Tibial artery (tissue), 4 donors: ENCODE measurements at regions of chr10 and their contacts with region 1.

Region 1: GRCh38 chr10:69239816-69240434 is 19.8 kb downstream of the HKDC1 start:
- DNase-seq: peak; percentile 65 to 86
- H3K4me3 ChIP-seq: no peak overlapping the region
- H3K27ac ChIP-seq: peak overlapping the region; percentile 23 to 37
- H3K4me1 ChIP-seq: peaks cover 0 to 38% (median 12%) of the 10 kb centered on the region in 4 donors
- H3K27me3 ChIP-seq: no peaks in the 10 kb centered on the region
- CTCF ChIP-seq: no peak

Region 2: DNA sequence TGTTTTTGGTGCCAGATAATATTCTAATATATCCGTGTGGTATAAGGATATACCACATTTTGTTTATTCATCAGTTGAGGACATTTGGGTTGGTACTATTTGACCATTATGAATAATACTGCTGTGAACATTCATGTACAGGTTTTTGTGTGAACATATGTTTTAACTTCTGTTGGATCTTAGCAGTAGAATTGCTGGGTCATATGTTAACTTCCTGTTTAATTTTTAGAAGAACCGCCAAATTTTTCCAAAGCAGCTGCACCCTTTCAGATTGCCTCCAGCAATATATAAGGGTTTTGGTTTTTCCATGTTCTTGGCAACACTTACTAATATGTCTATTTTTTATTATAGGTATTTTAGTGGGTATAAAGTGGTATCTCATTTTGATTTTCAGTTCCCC is 93.2 kb before region 1 on chr10:
- intact Hi-C with region 1: no loop called
- DNase-seq: no peak
- H3K4me3 ChIP-seq: no peak overlapping the region
- H3K27ac ChIP-seq: no peak overlapping the region
- H3K4me1 ChIP-seq: peaks cover 0 to 4% (median 0%) of the 10 kb centered on the region in 4 donors
- H3K27me3 ChIP-seq: no peaks in the 10 kb centered on the region
- CTCF ChIP-seq: no peak

Region 3: DNA sequence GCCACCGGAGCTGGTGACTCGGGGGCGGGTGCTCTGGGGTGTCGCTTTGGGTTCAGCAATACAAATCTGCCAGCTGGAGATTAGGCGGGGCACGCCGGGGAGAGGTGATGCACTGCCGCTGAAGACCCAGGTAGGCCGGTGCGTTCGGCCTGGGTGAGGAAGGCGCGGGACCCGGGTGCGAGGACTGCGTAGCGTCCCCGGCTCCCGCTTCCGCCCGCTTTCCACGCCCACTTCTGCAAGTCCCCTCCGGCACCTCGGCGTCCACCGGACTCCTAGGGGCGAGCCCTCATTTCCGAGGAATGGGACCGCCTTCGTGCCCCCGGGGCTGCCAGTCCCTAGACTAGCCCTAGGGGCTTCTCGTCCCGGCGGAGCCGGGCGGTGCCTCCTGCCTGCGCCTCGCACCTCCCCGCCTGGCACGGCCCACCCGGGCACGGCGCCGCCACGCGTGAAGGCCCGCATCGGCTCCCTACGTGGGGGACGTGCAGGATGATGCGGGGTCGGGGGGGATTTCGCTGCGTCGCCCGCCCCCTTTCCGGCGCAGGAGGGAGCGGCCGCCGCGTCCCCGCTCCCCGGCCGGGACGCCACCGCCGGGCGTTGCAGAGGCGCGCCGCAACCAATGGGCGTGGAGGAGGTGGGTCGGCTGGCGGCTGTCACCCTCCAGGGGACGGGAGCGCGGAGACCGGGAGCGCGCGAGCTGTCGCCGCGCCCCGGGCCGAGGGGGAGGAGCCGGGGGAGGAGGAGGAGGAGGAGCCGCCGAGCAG is 78.4 kb after region 1 on chr10:
- intact Hi-C with region 1: loop called (anchors 5 kb)
- DNase-seq: peak; percentile 88 to 95
- H3K4me3 ChIP-seq: peak overlapping the region; percentile 85 to 91
- H3K27ac ChIP-seq: peak overlapping the region; percentile 91 to 95
- H3K4me1 ChIP-seq: peaks cover 4 to 47% (median 31%) of the 10 kb centered on the region in 4 donors
- H3K27me3 ChIP-seq: no peaks in the 10 kb centered on the region
- CTCF ChIP-seq: no peak

Region 4: DNA sequence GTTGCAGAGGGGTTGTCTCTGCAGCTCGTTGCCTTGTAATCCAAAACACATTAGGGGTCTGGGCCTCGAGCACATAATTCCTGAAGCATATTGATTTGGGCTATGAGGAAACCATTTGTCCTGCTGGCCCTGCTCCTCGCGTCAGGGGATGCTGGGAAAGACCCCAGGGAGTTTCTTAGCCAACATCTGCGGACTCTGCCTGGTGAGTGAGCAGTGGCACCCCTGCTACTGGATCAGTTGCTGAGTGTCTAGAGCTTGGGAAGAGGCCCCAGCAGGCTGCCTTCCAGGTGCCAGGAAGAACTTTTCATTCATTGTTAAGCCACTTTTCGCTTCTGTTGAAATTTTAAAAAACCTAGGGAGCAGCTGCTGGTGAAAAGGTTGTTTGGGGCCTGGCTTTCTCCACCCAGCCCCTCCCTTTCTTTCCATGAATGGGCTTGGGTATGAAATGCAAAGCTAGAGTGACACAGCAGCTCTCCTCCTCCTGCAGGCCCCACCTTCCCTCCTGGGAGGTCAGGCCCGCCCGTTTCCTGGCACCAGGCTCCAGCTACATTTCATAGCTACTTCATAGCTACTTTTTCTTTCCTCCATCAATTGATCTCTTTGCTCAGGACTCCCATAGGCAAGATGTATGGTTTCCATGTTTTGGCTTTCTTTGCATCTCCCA is 150.0 kb after region 1 on chr10:
- intact Hi-C with region 1: loop called (anchors 2 kb)
- DNase-seq: no peak
- H3K4me3 ChIP-seq: no peak overlapping the region
- H3K27ac ChIP-seq: peak overlapping the region; percentile 4 to 52
- H3K4me1 ChIP-seq: peaks cover 0 to 17% (median 11%) of the 10 kb centered on the region in 4 donors
- H3K27me3 ChIP-seq: no peaks in the 10 kb centered on the region
- CTCF ChIP-seq: no peak